KBM-7 (cell line): ENCODE measurements at regions of chr16 and their contacts with region 1.

Region 1: DNA sequence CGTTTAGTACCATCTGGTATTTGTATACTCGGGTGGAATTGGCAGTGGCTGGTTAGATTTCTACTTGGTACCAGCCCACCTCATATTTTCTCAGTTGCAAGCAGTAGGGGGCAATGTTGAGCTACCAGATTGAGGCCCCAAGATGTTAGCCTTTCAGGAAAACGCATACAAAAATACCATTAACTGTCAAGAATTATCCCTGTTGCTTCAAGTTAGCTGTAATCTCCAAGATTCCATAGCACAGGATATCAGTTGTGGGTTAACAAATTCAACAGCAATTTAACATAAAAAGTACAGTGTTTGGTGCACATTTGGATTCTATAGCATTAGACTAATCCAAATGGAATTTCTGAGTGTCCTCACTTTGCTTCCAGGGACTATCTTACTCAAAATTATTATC is 188.2 kb downstream of the FTO start:
- DNase-seq: peak; percentile 87

Region 2: GRCh38 chr16:53549970-53550690 is 342.0 kb before region 1 on chr16:
- in situ Hi-C with region 1: loop called (anchors 25 kb)
- DNase-seq: peak; percentile 82